Left ventricle myocardium inferior (tissue), 1 donor: ENCODE measurements at regions of chr5 and their contacts with region 1.

Region 1: DNA sequence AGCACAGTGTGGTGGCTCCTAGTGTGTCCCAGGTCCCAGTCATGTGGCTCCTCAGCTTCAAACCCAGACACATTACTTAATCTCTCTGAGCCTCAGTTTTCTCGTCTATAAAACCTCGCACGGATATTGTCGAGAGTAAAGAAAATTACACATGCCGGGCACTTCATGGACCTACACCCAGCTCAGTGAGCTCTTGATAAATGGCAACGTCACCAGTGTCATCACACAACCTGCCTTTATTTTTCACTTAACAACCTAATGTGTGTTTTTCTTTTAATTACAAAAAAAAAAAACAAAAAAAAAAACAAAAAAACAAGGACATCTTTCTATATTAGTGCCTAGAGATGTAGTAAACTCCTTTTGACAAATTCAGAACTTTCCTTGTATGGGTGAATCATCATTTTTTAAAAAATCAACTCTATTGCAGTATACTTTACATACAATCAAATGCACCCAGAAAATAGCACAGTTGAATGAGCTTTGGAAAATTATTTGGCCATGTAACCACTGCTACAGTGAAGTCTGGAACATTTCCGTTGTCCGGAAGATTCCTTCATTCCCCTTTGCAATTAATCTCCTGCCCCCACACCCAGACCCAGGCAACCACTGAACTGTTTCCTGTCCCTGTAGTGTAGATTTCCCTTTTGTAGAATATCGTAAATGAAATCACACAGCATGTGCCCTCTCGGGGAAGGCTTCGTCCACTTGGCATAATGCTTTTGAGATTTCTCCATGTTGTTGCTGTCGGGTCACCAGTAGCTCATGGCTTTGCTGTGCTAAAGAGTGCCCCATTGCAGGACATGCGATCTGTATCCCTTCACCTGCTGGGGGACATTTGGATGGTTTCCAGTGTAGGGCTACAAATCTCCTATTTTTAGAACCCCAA is 100.4 kb upstream of the LARP1 start:
- DNase-seq: no peak
- H3K4me3 ChIP-seq: peak overlapping the region; percentile 43
- H3K27ac ChIP-seq: peak overlapping the region; percentile 59
- H3K4me1 ChIP-seq: peaks cover 18% of the 10 kb centered on the region
- H3K27me3 ChIP-seq: no peaks in the 10 kb centered on the region
- CTCF ChIP-seq: no peak

Region 2: DNA sequence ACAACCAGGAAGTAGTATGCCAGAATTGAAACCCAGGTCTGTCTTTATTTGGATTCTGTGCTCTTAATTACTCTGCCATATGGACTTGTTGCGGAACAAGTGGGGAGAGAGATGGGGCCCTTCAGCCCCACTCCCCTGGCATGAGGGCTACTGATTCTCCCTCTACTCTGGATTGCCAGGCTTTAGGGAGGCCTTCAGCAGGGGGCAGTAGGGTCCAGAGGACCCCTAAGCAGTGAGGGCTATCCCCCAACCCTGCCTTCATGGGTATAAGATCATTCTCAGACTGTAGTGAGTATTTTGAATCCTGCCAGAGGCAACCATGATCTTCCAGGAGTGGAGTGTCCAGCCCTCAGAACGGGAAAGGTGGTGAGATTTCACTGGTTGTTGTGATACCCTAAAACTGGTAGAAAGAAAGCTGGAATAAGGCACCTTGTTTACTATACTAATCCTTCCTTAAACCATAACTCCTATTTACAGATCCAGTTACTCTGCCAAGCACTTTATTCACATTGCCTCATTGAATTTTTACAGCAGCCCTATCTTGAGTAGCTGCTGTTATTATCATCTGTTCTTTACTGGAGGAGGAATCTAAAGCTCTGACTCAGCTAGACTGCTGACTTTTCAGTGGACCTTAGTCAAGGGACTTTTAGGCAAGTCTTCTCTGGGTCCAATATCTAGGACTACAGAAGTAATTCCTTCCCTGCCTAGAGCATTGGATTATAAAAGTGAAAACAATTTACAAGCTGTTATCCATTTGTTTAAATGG is 69.2 kb after region 1 on chr5:
- intact Hi-C with region 1: loop called (anchors 10 kb)
- DNase-seq: no peak
- H3K4me3 ChIP-seq: no peak overlapping the region
- H3K27ac ChIP-seq: peak overlapping the region; percentile 62
- H3K4me1 ChIP-seq: peaks cover 20% of the 10 kb centered on the region
- H3K27me3 ChIP-seq: no peaks in the 10 kb centered on the region
- CTCF ChIP-seq: no peak

Region 3: GRCh38 chr5:154811653-154812365 is 157.1 kb after region 1 on chr5:
- intact Hi-C with region 1: loop called (anchors 5 kb)
- DNase-seq: peak; percentile 44
- H3K4me3 ChIP-seq: no peak overlapping the region
- H3K27ac ChIP-seq: peak overlapping the region; percentile 5
- H3K4me1 ChIP-seq: peaks cover 22% of the 10 kb centered on the region
- H3K27me3 ChIP-seq: no peaks in the 10 kb centered on the region
- CTCF ChIP-seq: peak; percentile 95